Activated CD4-positive, alpha-beta T cell treated with anti-CD3 and anti-CD28 coated beads for 36 hours (primary cell): ENCODE measurements at regions of chr11 and their contacts with region 1.

Region 1: DNA sequence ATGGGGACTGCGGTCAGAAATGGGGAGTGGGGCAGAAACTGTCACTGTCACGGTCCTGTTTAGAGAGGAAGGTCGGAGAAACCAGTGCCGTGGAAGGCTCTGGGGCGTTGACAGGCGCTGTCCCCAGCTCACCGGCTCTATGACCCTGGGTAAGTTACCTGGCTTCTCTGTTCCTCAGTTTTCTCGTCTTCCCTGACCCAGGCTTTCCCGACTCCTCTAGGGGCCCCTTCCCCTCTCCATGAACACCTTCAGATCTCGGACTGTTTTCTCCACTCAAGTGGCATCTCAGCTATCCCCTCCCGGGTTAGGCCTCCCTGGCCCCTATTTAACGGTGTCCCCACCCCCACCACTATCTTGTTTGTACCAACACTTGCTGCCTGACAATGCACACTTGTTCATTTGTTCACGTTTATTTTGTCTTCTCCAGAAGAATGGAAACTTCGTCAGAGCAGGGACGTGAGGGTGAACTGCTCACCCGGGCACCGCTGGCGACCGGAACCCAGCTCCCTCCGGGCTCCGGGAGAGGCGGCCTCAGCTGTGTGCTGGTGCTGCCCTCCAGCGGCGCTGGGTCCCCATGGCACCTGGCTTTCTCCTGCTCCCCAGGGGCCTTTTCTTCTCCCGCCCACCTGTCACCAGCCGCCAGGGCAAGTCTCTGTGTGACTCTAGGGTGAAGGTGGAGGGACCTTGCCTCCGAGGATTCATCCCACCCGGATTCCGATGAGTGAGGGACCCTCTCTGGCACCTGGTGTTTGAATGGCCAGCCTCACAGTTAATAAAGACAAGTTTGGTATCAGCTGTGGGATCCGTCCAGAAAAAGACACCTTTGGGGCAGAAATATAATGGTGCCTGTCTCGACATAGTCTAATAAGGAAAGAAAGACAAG is 33.1 kb upstream of the SLC35C1 start:
- DNase-seq: peak; percentile 94
- ATAC-seq: peak; percentile 95
- H3K4me3 Mint-ChIP-seq: peak overlapping the region; percentile 78
- H3K27ac Mint-ChIP-seq: peak overlapping the region; percentile 86
- H3K4me1 Mint-ChIP-seq: peaks cover 21% of the 10 kb centered on the region
- H3K27me3 Mint-ChIP-seq: peaks cover 2% of the 10 kb centered on the region

Region 2: GRCh38 chr11:45354976-45355705 is 416.7 kb before region 1 on chr11:
- CTCF ChIA-PET with region 1: interaction called, 6 read pairs
- POLR2A ChIA-PET with region 1: no interaction called
- intact Hi-C with region 1: loop called in 1 of 2 experiments (anchors 1 kb)
- DNase-seq: peak; percentile 93
- ATAC-seq: peak; percentile 97
- H3K4me3 Mint-ChIP-seq: peak overlapping the region; percentile 75
- H3K27ac Mint-ChIP-seq: peak overlapping the region; percentile 72
- H3K4me1 Mint-ChIP-seq: peaks cover 21% of the 10 kb centered on the region
- H3K27me3 Mint-ChIP-seq: peaks cover 2% of the 10 kb centered on the region

Region 3: DNA sequence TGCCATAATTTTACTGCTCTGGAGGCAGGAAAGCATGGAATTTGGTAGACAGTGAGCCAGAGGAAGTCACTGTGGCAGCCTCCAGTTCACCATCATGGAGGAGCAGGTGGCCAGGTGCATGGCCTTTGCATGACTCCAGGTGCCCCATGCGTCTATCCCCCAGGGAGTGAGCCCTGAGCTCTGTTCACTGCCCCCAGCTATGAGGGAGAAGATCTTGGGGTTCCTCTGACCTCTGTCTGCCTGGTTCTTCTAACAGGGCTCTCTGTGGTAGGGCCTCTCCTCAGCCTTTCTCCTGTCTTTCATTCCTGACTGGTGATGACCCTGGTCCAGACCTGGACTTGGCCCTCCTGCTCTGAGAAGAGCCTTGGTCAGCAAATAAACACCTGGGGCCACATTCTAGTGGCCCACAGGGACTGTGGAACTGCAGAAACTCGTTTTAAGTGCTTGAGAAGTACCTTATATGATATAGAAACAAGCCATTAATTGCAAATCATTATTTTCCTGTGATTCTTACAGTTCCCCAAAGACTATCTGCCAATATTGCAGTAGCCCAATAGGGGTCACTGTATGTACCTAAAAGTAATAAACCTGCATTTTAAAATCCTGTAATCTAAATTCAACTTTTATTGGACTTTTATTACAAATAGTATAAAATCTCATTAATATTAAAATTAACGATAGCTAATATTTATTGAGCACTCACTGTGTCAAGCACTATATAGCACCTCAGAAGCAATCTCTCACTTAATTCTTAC is 365.7 kb before region 1 on chr11:
- CTCF ChIA-PET with region 1: interaction called, 4 read pairs
- POLR2A ChIA-PET with region 1: no interaction called
- intact Hi-C with region 1: loop called in 1 of 2 experiments (anchors 1 kb)
- DNase-seq: no peak
- ATAC-seq: no peak
- H3K4me3 Mint-ChIP-seq: no peak overlapping the region
- H3K27ac Mint-ChIP-seq: no peak overlapping the region
- H3K4me1 Mint-ChIP-seq: no peaks in the 10 kb centered on the region
- H3K27me3 Mint-ChIP-seq: peaks cover 13% of the 10 kb centered on the region

Region 4: DNA sequence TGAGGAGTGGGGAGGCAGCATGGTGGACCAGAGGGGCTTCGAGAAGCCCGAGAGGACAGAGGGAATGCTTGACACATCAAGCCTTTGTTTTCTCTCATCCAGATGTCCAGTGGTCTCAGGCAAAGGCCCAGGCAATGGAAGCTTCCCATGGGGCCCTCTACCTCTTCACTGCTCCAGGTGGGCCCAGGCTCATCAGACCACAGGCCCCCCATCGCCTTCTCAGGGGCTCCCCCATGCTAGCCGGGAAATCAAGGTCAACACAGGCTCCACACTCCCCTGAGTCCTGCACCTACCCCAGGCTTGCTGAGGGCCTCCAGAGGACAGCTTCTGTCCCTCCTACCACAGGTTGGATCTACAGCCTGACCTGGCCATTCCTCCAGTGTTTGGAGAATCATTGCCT is 263.9 kb before region 1 on chr11:
- CTCF ChIA-PET with region 1: no interaction called
- POLR2A ChIA-PET with region 1: no interaction called
- intact Hi-C with region 1: no loop called
- DNase-seq: no peak
- ATAC-seq: no peak
- H3K4me3 Mint-ChIP-seq: no peak overlapping the region
- H3K27ac Mint-ChIP-seq: no peak overlapping the region
- H3K4me1 Mint-ChIP-seq: no peaks in the 10 kb centered on the region
- H3K27me3 Mint-ChIP-seq: peaks cover 6% of the 10 kb centered on the region

Region 5: DNA sequence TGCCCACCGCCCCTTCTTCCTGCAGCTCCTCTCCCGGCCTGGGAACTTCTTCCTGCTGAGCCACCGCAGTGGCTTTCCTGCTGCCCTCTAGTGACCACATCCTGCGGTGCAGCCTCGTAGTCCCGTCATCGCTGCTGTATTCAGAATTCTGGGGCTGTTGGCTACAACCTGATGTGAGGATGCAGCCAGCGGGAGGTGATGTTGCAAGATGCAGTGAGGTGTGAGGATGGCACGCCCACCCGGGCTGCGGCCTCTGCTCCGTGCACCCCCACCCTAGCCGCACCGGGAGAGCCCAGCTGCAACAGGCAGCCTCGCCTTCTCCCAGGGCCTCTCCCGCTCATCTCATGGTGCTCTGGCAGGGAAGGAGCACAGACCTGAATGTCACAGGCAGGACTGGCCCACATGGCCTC is 116.5 kb before region 1 on chr11:
- CTCF ChIA-PET with region 1: interaction called, 29 read pairs
- POLR2A ChIA-PET with region 1: no interaction called
- intact Hi-C with region 1: loop called (anchors 2 to 5 kb)
- DNase-seq: peak; percentile 81
- ATAC-seq: peak; percentile 83
- H3K4me3 Mint-ChIP-seq: no peak overlapping the region
- H3K27ac Mint-ChIP-seq: no peak overlapping the region
- H3K4me1 Mint-ChIP-seq: peaks cover 3% of the 10 kb centered on the region
- H3K27me3 Mint-ChIP-seq: peaks cover 15% of the 10 kb centered on the region

Region 6: DNA sequence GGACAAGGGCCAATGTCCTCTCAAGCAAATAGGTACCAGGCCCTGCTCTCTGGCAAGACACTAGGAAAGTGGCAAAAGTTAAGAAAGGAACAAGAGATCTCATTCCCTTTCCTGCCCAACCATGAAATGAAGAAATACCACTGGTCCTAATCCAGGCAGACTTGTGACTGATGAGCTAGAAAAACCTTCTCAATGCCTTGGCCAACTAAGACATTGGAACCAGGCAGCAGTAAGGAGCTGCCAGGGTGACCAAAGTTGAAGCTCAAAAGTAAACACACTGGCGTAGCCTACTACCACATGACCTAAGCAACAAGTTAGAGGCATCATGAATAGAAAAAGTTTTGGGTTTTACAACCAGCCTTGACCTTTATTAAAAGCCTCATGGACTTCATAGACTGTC is 61.2 kb before region 1 on chr11:
- CTCF ChIA-PET with region 1: interaction called, 13 read pairs
- POLR2A ChIA-PET with region 1: no interaction called
- intact Hi-C with region 1: no loop called
- DNase-seq: no peak
- ATAC-seq: no peak
- H3K4me3 Mint-ChIP-seq: no peak overlapping the region
- H3K27ac Mint-ChIP-seq: no peak overlapping the region
- H3K4me1 Mint-ChIP-seq: no peaks in the 10 kb centered on the region
- H3K27me3 Mint-ChIP-seq: peaks cover 39% of the 10 kb centered on the region

Region 7: GRCh38 chr11:45761659-45762058 is 10.1 kb before region 1 on chr11:
- CTCF ChIA-PET with region 1: interaction called, 21 read pairs
- POLR2A ChIA-PET with region 1: no interaction called
- intact Hi-C with region 1: no loop called
- DNase-seq: no peak
- ATAC-seq: no peak
- H3K4me3 Mint-ChIP-seq: no peak overlapping the region
- H3K27ac Mint-ChIP-seq: no peak overlapping the region
- H3K4me1 Mint-ChIP-seq: no peaks in the 10 kb centered on the region
- H3K27me3 Mint-ChIP-seq: peaks cover 2% of the 10 kb centered on the region

Region 8: GRCh38 chr11:45818961-45819605 is 47.3 kb after region 1 on chr11:
- CTCF ChIA-PET with region 1: no interaction called
- POLR2A ChIA-PET with region 1: no interaction called
- intact Hi-C with region 1: no loop called
- DNase-seq: no peak
- ATAC-seq: no peak
- H3K4me3 Mint-ChIP-seq: no peak overlapping the region
- H3K27ac Mint-ChIP-seq: no peak overlapping the region
- H3K4me1 Mint-ChIP-seq: no peaks in the 10 kb centered on the region
- H3K27me3 Mint-ChIP-seq: no peaks in the 10 kb centered on the region